Activated CD4-positive, alpha-beta T cell treated with anti-CD3 and anti-CD28 coated beads, Interleukin-2, amount 10 ng/mL, durations not matched to agents 24 days and 14 days (primary cell): ENCODE measurements at regions of chr17 and their contacts with region 1.

Region 1: GRCh38 chr17:50139950-50140871 is 10.3 kb upstream of the SAMD14 start:
- DNase-seq: peak; percentile 95
- H3K4me3 Mint-ChIP-seq: peak overlapping the region; percentile 74
- H3K27ac Mint-ChIP-seq: peak overlapping the region; percentile 77
- H3K4me1 Mint-ChIP-seq: peaks cover 63% of the 10 kb centered on the region
- H3K27me3 Mint-ChIP-seq: no peaks in the 10 kb centered on the region

Region 2: DNA sequence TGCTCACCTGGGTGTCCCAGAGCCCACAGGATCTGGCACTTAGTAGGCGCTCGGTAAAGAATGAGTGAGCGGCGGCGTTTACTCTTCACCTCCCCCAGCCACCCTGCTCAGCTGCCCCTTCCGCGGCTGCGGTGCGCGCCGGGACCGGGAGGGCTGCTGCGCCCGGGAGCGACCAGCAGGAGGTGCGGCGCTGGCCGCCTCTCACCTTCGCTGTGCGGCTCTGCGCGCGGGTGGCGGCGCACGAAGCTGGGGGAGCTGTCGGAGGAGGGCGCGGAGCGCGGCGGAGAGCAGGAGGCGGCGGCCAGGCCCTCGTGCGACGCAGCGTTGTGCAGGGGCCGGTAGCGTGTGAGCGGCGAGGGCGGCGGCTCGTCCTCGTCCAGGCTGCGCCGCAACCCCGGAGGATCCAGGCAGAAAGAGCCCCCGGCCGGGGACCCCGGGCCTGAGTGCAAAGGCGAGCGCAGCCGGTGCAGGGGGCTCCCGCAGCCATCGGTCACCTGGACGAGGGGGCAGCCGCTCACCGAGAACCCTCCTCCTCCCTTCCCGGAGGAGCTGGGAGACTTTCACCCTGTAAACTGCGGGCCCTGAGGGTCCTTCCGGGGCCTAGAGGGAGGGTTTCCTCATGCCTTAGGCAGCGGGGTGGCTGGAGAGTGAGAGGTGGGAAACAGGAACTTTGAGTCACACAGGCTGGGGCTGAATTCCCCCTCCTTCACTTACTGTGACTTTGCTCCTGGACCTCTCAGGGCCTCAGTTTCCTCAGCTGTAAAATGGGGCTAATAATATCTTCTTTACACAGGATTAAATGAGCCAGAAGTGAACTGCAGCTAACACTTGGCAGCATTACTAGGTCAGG is 22.8 kb before region 1 on chr17:
- intact Hi-C with region 1: loop called (anchors 2 kb)
- DNase-seq: peak; percentile 91
- H3K4me3 Mint-ChIP-seq: peak overlapping the region; percentile 65
- H3K27ac Mint-ChIP-seq: no peak overlapping the region
- H3K4me1 Mint-ChIP-seq: peaks cover 10% of the 10 kb centered on the region
- H3K27me3 Mint-ChIP-seq: peaks cover 56% of the 10 kb centered on the region

Region 3: GRCh38 chr17:50151041-50151936 is 11.1 kb after region 1 on chr17:
- intact Hi-C with region 1: loop called (anchors 1 kb)
- DNase-seq: peak; percentile 97
- H3K4me3 Mint-ChIP-seq: peak overlapping the region; percentile 93
- H3K27ac Mint-ChIP-seq: peak overlapping the region; percentile 96
- H3K4me1 Mint-ChIP-seq: peaks cover 44% of the 10 kb centered on the region
- H3K27me3 Mint-ChIP-seq: no peaks in the 10 kb centered on the region

Region 4: DNA sequence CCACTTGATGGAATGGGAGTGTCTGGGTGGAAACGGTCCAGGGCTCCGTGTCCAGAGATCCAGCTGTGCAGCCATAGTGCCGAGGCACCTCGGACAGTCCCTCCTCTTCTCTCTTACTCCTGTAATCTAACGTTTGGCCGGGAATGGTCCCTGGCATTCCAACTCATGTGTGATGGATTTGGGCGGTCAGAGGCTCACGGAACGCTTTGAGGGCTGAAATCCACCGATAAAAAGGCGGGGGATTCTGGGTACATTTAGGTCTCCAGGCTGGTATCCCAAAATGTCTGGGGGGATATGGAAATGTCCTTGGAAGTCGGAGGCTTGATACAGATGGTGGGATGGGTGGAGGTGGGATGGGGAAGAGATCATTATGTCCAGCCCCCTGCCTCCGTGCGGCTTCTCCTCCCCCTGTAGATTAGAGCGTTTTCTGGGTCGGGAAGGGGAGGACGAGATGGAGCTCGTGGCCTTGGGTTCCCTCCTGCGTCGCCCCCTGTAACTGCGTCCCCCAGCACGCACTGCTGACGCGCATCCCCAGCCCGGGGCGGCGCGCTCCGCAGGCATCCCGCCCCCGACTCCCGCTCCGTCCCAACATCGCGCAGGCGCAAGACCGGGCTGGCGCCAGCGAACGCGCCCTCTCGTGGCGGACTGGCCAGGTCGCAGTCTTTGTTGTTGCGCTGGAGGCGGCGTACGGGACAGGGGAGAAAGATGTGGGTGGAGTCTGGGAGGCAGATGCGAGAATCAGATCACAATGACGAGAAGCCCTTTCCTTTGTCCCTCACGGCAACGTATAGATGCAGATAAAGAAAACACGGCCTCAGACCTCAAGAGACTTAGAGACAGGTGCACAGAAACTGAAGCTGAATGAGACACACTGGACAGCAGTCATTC is 21.1 kb after region 1 on chr17:
- intact Hi-C with region 1: loop called (anchors 1 kb)
- DNase-seq: peak; percentile 99
- H3K4me3 Mint-ChIP-seq: peak overlapping the region; percentile 80
- H3K27ac Mint-ChIP-seq: peak overlapping the region; percentile 97
- H3K4me1 Mint-ChIP-seq: peaks cover 36% of the 10 kb centered on the region
- H3K27me3 Mint-ChIP-seq: peaks cover 3% of the 10 kb centered on the region

Region 5: GRCh38 chr17:50177983-50178834 is 38.0 kb after region 1 on chr17:
- intact Hi-C with region 1: loop called (anchors 5 kb)
- DNase-seq: peak; percentile 77
- H3K4me3 Mint-ChIP-seq: peak overlapping the region; percentile 33
- H3K27ac Mint-ChIP-seq: peak overlapping the region; percentile 77
- H3K4me1 Mint-ChIP-seq: peaks cover 11% of the 10 kb centered on the region
- H3K27me3 Mint-ChIP-seq: peaks cover 5% of the 10 kb centered on the region